ENCODE measurements at regions of chr19 and their contacts with region 1.

Region 1: DNA sequence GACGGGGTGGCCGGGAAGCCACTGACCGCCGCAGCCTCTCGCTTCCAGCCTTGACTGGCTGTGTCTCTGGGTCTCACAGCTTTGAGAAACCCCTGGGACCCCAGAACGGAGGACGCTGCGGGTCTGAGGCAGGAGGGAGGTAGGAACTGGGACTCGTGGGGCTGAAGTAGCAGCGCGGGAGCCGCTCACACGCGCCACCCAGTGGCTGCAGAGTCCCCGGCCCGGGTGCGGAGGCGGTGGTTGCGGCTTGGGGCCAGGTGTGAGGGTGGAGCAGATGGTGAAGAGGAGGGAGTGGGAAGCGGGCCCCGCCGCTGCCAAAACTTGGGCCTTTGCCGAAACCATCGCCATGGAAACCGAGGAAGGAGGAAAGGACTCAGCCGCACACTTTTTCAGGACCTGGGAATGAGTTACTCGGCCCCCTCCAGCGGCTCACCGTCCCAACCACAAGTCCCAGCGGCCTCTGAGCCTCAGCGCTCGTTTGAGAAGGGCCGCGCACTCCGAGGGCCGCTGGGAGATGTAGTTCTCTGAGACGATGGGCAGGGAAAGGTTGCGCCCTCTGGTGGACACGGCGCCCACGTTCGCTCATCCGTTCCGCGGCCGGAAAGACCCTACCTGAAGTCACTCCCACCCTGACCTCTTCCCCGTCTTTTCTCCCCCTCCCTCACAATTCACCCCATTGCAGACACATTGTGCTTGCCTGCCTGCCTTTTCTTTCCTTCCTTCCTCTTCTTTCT is 2.2 kb upstream of the SLC17A7 start:
- DNase-seq: peak; percentile 96
- H3K4me3 Mint-ChIP-seq: peak overlapping the region; percentile 75
- H3K27ac Mint-ChIP-seq: peak overlapping the region; percentile 72
- H3K4me1 Mint-ChIP-seq: peaks cover 23% of the 10 kb centered on the region
- H3K27me3 Mint-ChIP-seq: peaks cover 38% of the 10 kb centered on the region

Region 2: DNA sequence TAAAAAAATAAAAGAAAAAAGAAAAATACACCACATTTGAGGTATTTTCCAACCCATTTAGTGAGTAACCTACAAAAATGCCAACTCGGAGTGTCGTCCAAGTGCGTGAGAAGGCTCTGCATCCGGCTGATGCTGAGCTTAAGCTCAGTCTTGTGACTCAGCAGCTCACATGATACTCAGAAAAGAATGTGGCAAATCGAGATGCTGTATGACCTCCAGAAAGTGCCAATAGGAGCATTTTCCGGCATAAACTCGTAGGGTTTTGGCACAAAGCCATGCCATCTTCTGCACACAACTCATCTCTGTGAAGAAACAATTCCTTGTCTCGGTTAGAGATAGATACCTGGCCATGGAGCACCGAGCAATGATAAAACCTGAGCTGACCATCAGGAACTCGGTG is 227.5 kb before region 1 on chr19:
- CTCF ChIA-PET with region 1: no interaction called
- intact Hi-C with region 1: no loop called
- DNase-seq: no peak
- H3K4me3 Mint-ChIP-seq: no peak overlapping the region
- H3K27ac Mint-ChIP-seq: no peak overlapping the region
- H3K4me1 Mint-ChIP-seq: no peaks in the 10 kb centered on the region
- H3K27me3 Mint-ChIP-seq: peaks cover 2% of the 10 kb centered on the region

Region 3: DNA sequence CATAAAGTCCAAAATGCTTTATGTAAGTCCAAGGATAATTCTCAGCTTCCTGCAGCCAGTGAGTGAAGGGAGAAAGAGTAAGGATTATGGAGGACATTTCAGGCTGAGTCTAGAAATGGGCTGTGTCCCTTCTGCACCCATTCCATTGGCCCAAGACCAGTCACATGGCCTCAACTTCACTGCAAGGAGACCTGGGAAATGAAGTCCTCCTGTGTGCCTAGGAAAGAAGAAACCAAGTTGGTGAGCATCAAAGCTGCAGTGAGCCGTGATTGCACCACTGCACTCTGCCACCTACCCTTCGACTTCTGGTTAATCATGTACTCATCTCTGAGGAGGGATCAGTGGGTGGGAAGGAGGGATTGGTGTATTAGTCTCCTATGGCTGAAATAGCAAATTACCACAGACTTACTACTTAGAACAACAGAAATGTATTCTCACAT is 111.9 kb before region 1 on chr19:
- CTCF ChIA-PET with region 1: no interaction called
- intact Hi-C with region 1: loop called (anchors 1 kb)
- DNase-seq: peak; percentile 84
- H3K4me3 Mint-ChIP-seq: peak overlapping the region; percentile 44
- H3K27ac Mint-ChIP-seq: peak overlapping the region; percentile 81
- H3K4me1 Mint-ChIP-seq: peaks cover 74% of the 10 kb centered on the region
- H3K27me3 Mint-ChIP-seq: no peaks in the 10 kb centered on the region

Region 4: GRCh38 chr19:49423071-49423984 is 20.2 kb before region 1 on chr19 and contains the start of gene PTH2:
- CTCF ChIA-PET with region 1: no interaction called
- intact Hi-C with region 1: no loop called
- DNase-seq: no peak
- H3K4me3 Mint-ChIP-seq: peak within 1 kb of the TSS; percentile 65
- H3K27ac Mint-ChIP-seq: no peak within 1 kb of the TSS
- H3K4me1 Mint-ChIP-seq: peaks cover 49% of the 10 kb centered on the region
- H3K27me3 Mint-ChIP-seq: peaks cover 77% of the 10 kb centered on the region
- total RNA-seq, gene PTH2: not detected

Region 5: DNA sequence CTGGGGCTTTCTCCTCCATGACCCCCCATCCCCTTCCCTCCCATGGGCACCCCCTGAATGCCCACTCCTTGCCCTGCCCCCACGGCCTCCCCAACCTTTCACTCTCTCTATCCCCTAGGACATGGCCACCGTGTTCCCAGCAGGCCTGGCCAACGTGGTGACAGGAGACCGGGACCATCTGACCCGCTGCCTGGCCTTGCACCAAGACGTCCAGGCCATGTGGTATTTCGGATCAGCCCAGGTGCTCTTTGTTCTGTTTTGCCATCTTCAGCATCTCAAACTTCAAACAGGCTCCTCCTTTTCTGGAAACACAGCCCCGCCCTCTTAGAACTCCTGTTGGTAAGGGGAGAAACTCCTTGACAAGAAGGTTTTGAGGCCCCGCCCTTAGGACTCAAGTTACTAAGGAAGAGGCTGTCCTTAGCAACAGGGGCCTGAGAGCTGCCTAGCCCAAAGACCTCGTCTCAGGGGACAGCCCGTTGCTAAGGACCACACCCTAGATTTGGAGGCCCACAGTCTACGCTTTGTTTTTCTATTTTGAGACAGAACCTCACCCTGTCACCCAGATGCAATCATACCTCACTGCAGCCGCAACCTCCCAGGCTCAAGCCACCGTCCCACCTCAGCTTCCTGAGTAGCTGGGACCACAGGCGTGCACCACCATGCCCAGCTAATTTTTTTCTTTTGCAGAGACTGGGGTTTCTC is 25.4 kb after region 1 on chr19:
- CTCF ChIA-PET with region 1: interaction called, 6 read pairs
- intact Hi-C with region 1: loop called (anchors 1 kb)
- DNase-seq: peak; percentile 90
- H3K4me3 Mint-ChIP-seq: peak overlapping the region; percentile 43
- H3K27ac Mint-ChIP-seq: peak overlapping the region; percentile 96
- H3K4me1 Mint-ChIP-seq: peaks cover 48% of the 10 kb centered on the region
- H3K27me3 Mint-ChIP-seq: no peaks in the 10 kb centered on the region

Region 6: DNA sequence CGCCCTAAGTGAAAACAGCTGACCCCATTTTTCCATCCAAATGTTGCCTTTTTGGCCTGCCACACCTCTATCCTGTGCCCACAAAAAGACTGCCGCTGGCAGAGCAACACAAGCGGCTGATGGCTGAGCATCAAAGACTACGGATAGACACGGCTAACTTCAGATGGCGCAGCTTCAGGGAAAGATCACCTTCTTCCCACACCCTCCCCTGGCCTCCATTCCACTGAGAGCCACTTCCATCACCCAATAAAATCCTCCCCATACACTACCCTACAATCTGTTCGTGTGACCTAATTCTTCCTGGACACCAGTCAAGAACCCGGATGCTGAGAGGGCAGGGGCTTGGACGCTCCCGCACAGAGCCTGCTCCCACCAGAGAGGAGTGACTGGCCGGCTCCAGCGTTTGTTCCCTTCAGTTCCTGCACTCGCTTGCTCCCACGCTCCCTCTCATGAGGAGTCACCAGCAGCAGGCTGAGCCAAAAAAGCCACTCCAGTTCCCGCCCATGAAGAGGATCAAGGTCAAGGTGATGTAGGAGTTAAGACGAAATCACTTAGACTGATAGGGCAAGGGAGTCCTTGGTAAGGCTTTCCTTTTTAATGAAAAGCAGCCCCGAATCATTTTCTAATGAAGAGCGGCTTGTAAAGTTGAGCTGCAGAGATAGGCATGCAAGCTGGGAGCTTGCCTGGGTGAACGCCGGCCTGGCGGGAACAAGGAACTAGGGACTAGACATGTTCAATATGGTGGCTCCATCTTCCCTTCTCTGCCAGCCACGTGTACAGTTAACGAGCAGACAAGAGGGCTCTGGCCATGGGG is 283.9 kb after region 1 on chr19:
- CTCF ChIA-PET with region 1: no interaction called
- intact Hi-C with region 1: no loop called
- DNase-seq: no peak
- H3K4me3 Mint-ChIP-seq: no peak overlapping the region
- H3K27ac Mint-ChIP-seq: no peak overlapping the region
- H3K4me1 Mint-ChIP-seq: no peaks in the 10 kb centered on the region
- H3K27me3 Mint-ChIP-seq: no peaks in the 10 kb centered on the region